Ascending aorta (tissue), 2 donors: ENCODE measurements at regions of chr2 and their contacts with region 1.

Region 1: GRCh38 chr2:100562732-100563720 is at the start of gene PDCL3:
- DNase-seq: peak; percentile 95 to 99
- H3K4me3 ChIP-seq: peak within 1 kb of the TSS; percentile 79 to 84
- H3K27ac ChIP-seq: peak within 1 kb of the TSS; percentile 79 to 85
- H3K4me1 ChIP-seq: peaks cover 0 to 9% of the 10 kb centered on the region in 2 donors
- H3K27me3 ChIP-seq: no peaks in the 10 kb centered on the region
- CTCF ChIP-seq: peak in 1 of 3 experiments; percentile 23
- total RNA-seq, gene PDCL3: 8.1 TPM

Region 2: DNA sequence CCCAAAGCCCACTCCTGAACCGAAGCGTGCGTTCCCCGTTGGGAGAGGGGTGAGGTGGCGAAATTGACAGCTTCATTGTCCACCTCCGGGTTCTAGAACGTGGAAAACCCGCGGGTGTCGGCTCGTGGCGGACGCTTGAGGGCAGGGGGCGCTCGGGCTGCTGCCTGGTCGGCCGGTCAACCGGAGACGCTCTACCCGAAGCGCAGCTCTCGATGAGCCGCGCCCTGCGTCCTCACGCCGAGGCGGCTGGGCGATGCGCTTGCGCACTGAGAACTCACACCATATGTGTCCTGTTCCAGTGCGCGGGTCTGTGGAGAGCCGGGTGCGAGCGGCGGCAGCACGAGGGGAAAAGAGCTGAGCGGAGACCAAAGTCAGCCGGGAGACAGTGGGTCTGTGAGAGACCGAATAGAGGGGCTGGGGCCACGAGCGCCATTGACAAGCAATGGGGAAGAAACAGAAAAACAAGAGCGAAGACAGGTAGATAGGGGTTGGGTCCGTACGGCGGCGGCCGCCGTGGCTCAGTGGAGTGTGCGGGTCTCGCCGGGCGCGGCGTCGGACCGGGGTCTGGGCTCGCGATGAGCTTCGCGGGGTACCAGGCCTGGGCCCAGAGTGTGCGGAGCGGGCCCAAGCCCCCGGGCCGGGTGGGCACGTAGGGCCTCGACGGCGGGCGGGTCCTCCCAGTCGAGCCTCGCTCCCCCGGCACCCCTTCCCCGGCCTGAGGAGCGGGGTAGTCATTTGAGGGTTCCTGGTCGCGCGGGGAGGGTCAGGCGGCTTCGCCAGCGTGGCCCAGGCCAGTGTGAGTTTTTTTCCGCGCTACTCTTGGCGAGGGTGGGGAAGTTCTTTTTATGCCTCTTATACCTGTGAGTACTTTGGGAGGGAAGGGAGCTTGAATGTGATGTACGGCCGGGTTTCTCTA is 1225.7 kb before region 1 on chr2 and contains the start of gene EIF5B:
- intact Hi-C with region 1: loop called (anchors 5 kb)
- DNase-seq: peak; percentile 86 to 98
- H3K4me3 ChIP-seq: peak within 1 kb of the TSS; percentile 72 to 82
- H3K27ac ChIP-seq: peak within 1 kb of the TSS; percentile 86 to 96
- H3K4me1 ChIP-seq: peaks cover 6 to 11% of the 10 kb centered on the region in 2 donors
- H3K27me3 ChIP-seq: no peaks in the 10 kb centered on the region
- CTCF ChIP-seq: peak; percentile 17 to 83 (median 79)
- total RNA-seq, gene EIF5B: 38.2 TPM

Region 3: DNA sequence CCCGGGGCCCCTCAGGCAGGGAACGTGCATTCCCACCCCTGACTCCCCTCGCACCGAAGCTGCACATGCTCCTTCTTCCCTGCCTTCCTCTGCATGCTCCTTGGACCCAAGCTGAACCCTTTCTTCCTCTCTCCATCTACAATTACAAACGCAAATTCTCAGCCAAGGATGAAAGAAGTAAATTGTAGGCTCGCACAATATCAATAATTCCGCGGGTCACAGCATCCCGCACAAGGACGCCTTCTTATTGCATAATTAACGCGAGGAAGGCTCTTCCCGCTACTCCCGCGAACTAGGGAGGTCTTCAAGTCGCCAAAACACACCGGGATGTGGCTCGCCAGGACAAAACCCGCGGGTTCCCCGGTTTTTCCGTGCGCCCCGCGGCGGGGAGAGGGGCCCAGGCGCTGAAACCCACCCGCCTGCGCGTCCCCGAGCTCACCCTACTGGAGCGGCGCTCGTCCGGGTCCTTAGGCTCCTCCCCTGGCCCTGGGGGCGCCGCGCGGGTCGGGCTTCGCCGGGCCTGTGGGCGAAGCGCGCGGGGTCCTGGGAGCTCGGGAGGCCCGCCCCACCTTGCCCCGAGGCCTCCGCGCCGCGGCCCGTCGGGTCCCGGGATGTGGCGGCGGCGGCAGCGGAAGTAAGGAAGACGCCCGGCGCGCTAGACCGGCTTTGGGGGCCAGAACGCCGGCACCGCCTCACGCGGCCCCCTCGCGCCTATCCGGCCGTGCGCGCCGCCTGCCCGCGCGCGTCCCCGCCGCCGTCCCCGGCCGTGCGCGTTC is 145.9 kb before region 1 on chr2 and contains the start of gene CHST10:
- intact Hi-C with region 1: loop called (anchors 5 kb)
- DNase-seq: peak in 1 of 2 donors; percentile 70
- H3K4me3 ChIP-seq: peak within 1 kb of the TSS; percentile 83 to 84
- H3K27ac ChIP-seq: peak within 1 kb of the TSS; percentile 66 to 75
- H3K4me1 ChIP-seq: peaks cover 0 to 6% of the 10 kb centered on the region in 2 donors
- H3K27me3 ChIP-seq: no peaks in the 10 kb centered on the region
- CTCF ChIP-seq: no peak
- total RNA-seq, gene CHST10: 4.9 TPM

Region 4: GRCh38 chr2:100494712-100495111 is 68.3 kb before region 1 on chr2:
- intact Hi-C with region 1: no loop called
- DNase-seq: no peak
- H3K4me3 ChIP-seq: no peak overlapping the region
- H3K27ac ChIP-seq: no peak overlapping the region
- H3K4me1 ChIP-seq: no peaks in the 10 kb centered on the region
- H3K27me3 ChIP-seq: no peaks in the 10 kb centered on the region
- CTCF ChIP-seq: no peak

Region 5: DNA sequence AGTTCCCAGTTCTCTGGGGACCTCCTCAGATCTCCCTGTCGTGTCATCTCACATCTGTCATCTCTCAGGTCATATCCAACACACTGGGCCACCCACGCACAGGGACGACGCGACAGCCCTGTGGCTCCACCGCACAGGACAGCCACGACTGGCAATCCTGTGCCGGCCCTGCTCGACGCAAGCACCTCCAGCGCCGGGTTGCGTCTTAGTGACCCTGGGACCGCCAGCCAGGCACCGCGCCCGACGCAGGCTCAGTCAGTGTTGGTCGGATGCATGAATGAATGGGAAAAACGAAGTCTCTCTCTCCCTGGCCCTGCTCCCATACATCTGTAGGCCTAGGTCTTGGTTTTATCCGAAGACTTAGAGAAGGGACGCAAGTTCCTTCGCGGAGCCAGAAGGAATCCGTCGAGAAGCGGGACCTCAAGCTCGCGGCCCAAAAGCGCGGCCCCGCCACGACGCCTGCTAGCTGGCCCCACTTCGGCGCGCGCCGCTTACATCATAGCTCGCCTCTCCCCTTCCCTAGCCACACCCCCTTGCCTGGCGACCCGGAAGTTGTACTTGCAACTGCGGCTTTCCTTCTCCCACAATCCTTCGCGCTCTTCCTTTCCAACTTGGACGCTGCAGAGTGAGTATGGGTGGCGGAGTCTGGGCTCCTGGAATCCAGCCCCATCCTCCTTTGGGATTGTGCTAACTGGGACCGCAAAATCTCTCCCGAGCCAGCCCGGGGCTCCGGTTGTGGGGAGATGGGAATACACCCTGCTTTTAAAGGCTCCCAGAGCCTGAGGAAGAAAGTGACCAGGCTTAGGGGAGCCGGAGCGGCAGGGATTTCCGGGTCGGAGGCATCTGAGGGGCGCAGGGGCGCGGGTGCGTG is 438.9 kb after region 1 on chr2 and contains the start of gene RPL31:
- intact Hi-C with region 1: loop called (anchors 2 kb)
- DNase-seq: peak; percentile 89 to 98
- H3K4me3 ChIP-seq: peak within 1 kb of the TSS; percentile 90
- H3K27ac ChIP-seq: peak within 1 kb of the TSS; percentile 89 to 91
- H3K4me1 ChIP-seq: peaks cover 3 to 15% of the 10 kb centered on the region in 2 donors
- H3K27me3 ChIP-seq: no peaks in the 10 kb centered on the region
- CTCF ChIP-seq: no peak
- total RNA-seq, gene RPL31: 479 TPM

Region 6: DNA sequence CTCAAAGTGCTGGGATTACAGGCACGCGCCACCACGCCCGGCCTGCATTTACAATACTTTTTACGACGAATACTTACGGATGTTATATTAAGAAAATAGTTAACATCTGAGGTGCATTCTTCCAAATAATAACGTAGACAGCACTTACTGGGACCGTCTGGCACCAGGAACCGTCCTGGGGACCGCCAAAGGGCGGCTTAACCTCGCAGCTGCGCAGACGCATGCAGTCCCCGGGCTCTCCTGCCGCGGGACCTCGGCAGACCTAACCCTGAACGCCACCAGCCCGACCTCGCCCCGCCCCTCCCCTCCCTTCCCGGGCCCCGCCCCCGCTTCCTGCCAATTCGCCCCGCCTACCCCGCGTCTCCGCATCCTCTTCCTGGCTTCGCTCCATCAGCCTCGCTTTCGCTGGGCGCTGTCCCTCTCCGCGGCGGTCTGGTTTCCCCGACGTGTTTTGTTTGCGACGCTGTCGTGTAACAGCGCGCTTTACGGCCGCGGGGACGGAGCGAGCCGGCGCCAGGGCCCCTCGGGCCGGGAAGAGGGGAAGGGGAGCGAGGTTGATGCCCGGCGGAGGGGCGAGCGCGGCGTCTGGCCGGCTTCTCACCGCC is 689.5 kb after region 1 on chr2 and contains the start of gene CNOT11:
- intact Hi-C with region 1: loop called (anchors 10 kb)
- DNase-seq: peak; percentile 93 to 99
- H3K4me3 ChIP-seq: peak within 1 kb of the TSS; percentile 83 to 95
- H3K27ac ChIP-seq: peak within 1 kb of the TSS; percentile 90 to 97
- H3K4me1 ChIP-seq: peaks cover 4 to 11% of the 10 kb centered on the region in 2 donors
- H3K27me3 ChIP-seq: no peaks in the 10 kb centered on the region
- CTCF ChIP-seq: peak in 1 of 3 experiments; percentile 25
- total RNA-seq, gene CNOT11: 32.5 TPM